Activated CD4-positive, alpha-beta T cell treated with anti-CD3 and anti-CD28 coated beads, Interleukin-2, amount 10 ng/mL, durations not matched to agents 24 days and 14 days (primary cell): ENCODE measurements at regions of chr4 and their contacts with region 1.

Region 1: DNA sequence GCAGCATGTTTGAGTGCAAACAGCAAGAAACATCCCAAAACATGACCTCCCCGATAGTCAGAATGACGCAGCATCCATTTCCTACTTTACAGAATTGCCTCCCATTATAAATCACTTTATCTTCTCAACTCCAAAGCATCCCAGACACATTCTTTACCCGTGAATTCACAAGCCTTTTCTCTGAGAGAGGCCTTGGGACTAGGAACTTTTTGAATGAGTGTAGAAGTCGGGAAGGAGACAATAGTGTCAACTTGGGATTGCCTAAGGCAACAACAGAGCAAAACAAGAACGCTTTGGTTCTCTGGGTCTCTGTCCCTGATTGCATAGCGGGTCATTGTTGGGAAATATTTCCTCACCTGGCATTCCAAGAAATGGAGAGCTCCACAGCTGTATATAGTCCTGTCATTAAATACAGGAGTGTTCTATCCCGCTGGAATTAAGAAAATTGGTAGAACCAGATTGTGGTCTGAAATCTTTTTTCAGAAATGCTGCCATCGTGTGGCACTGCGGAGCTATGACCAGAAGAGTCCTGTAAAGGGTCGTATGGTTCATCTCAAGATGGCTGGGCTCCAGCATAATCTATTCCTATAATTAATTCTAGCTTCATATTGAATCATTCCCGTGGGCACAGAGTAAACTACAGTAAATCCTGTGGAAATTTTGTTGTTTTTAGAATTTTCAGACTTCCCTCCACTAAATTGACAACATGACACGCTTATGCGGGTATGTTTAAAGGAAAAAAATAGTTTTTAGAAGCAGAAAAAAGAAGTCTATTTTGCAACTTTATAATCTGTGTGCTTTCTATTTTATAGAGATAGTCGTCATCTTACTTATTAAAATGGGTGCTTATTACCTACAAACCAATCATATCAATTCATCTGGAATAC is 2.0 kb upstream of the SPP1 start:
- DNase-seq: peak; percentile 77
- H3K4me3 Mint-ChIP-seq: no peak overlapping the region
- H3K27ac Mint-ChIP-seq: no peak overlapping the region
- H3K4me1 Mint-ChIP-seq: peaks cover 4% of the 10 kb centered on the region
- H3K27me3 Mint-ChIP-seq: peaks cover 49% of the 10 kb centered on the region

Region 2: GRCh38 chr4:87679449-87680169 is 293.9 kb before region 1 on chr4:
- intact Hi-C with region 1: loop called (anchors 10 kb)
- DNase-seq: peak; percentile 64
- H3K4me3 Mint-ChIP-seq: no peak overlapping the region
- H3K27ac Mint-ChIP-seq: no peak overlapping the region
- H3K4me1 Mint-ChIP-seq: no peaks in the 10 kb centered on the region
- H3K27me3 Mint-ChIP-seq: no peaks in the 10 kb centered on the region

Region 3: DNA sequence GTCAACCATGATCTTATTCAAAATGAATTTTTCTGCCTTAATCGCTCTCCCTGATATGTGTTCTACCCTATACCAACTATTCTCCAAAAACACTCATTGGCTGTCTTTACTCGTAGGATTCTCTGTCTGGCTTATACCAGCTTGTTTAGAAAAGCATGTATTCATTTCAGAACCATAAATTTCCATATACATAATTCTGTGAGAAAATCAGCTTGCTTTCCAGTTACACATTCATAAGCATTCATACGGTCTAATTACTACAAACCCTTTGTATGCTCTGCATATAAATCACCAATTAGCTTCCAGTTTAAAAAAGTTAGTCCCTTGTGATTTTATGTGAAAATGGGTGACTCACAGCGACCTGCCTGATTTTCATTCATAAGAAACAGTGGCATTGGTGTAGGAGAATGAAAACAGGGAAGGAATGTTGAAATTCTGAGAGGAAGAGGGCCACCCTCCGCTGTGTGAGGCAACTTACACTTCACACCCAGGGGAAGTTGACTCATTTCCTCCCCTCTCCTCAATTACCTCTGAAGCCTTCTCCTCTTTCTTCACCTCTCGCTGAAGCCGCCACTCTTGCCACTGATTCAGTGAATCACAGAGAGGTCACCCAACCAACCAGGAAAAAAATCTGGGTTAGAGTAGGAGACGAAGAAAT is 77.4 kb before region 1 on chr4:
- intact Hi-C with region 1: loop called (anchors 5 kb)
- DNase-seq: peak; percentile 63
- H3K4me3 Mint-ChIP-seq: no peak overlapping the region
- H3K27ac Mint-ChIP-seq: peak overlapping the region; percentile 5
- H3K4me1 Mint-ChIP-seq: peaks cover 11% of the 10 kb centered on the region
- H3K27me3 Mint-ChIP-seq: peaks cover 30% of the 10 kb centered on the region

Region 4: DNA sequence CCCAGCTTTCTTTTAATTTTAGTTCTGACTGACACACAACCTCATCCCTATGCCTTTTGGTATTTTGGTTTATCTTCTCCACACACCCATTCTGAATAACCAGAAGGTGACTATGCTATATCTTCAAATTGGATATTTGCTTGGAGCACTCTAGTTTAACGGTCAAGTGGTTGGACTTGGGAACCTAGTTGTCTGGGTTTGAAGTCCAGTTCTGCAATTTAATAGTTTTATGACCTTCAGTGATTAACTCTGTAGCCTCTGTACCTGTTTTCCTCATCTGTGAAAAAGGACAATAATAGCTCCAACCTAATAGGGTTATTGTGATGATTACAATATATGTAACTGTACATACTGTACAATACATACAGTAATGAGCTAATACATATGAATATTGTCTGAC is 290.8 kb after region 1 on chr4:
- intact Hi-C with region 1: no loop called
- DNase-seq: no peak
- H3K4me3 Mint-ChIP-seq: no peak overlapping the region
- H3K27ac Mint-ChIP-seq: no peak overlapping the region
- H3K4me1 Mint-ChIP-seq: no peaks in the 10 kb centered on the region
- H3K27me3 Mint-ChIP-seq: no peaks in the 10 kb centered on the region